ENCODE measurements at regions of chr1 and their contacts with region 1.

Region 1: GRCh38 chr1:26097696-26098095 is 13.9 kb upstream of the PDIK1L start:
- DNase-seq: no peak
- H3K4me3 ChIP-seq: no peak overlapping the region
- H3K27ac ChIP-seq: no peak overlapping the region
- H3K4me1 ChIP-seq: no peaks in the 10 kb centered on the region
- H3K27me3 ChIP-seq: peaks cover 16% of the 10 kb centered on the region
- CTCF ChIP-seq: no peak
- EP300 ChIP-seq: no peak
- POLR2A ChIP-seq: no peak

Region 2: GRCh38 chr1:25867210-25867991 is 230.3 kb before region 1 on chr1:
- in situ Hi-C with region 1: no loop called
- intact Hi-C with region 1: no loop called
- DNase-seq: no peak
- H3K4me3 ChIP-seq: no peak overlapping the region
- H3K27ac ChIP-seq: peak overlapping the region in 1 of 4 donors; percentile 62
- H3K4me1 ChIP-seq: peaks cover 7 to 26% (median 22%) of the 10 kb centered on the region in 4 donors
- H3K27me3 ChIP-seq: no peaks in the 10 kb centered on the region
- CTCF ChIP-seq: no peak
- EP300 ChIP-seq: no peak
- POLR2A ChIP-seq: no peak

Region 3: DNA sequence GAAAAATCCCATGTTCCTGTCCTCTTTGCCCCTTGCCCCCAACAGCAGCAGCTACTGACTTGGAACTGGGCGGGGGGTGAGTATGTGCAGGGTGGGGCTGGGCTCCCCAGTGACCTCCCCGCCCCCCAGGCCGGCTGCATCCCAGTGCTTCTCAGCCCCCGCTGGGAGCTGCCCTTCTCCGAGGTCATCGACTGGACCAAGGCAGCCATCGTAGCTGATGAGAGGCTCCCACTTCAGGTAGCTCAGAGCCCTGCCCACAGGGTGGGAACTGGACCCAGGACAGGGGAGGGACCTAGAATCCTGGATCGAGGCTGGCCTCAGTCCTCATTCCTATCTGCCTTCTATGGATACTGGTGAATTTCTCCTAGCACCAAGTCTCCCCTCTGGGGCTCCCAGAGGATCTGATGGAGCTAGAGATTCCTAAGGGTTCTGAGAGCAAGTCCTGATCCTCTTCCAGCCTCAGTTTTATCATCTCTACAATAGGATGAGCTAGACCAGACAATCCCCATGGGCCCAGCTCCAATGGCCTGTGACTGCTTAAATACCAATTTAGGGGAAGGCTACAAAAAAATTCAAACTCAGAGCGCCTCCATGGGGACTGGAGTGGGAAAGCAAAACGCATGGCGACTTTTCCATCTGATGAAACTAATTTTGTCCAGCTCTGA is 68.1 kb before region 1 on chr1:
- in situ Hi-C with region 1: no loop called
- intact Hi-C with region 1: no loop called
- DNase-seq: no peak
- H3K4me3 ChIP-seq: no peak overlapping the region
- H3K27ac ChIP-seq: no peak overlapping the region
- H3K4me1 ChIP-seq: peaks cover 0 to 1% (median under 1%) of the 10 kb centered on the region in 4 donors
- H3K27me3 ChIP-seq: peaks cover 4% of the 10 kb centered on the region
- CTCF ChIP-seq: no peak
- EP300 ChIP-seq: no peak
- POLR2A ChIP-seq: no peak

Region 4: GRCh38 chr1:26066857-26067256 is 30.8 kb before region 1 on chr1:
- in situ Hi-C with region 1: no loop called
- intact Hi-C with region 1: loop called (anchors 1 kb)
- DNase-seq: no peak
- H3K4me3 ChIP-seq: no peak overlapping the region
- H3K27ac ChIP-seq: no peak overlapping the region
- H3K4me1 ChIP-seq: no peaks in the 10 kb centered on the region
- H3K27me3 ChIP-seq: peaks cover 6% of the 10 kb centered on the region
- CTCF ChIP-seq: no peak
- EP300 ChIP-seq: no peak
- POLR2A ChIP-seq: no peak

Region 5: DNA sequence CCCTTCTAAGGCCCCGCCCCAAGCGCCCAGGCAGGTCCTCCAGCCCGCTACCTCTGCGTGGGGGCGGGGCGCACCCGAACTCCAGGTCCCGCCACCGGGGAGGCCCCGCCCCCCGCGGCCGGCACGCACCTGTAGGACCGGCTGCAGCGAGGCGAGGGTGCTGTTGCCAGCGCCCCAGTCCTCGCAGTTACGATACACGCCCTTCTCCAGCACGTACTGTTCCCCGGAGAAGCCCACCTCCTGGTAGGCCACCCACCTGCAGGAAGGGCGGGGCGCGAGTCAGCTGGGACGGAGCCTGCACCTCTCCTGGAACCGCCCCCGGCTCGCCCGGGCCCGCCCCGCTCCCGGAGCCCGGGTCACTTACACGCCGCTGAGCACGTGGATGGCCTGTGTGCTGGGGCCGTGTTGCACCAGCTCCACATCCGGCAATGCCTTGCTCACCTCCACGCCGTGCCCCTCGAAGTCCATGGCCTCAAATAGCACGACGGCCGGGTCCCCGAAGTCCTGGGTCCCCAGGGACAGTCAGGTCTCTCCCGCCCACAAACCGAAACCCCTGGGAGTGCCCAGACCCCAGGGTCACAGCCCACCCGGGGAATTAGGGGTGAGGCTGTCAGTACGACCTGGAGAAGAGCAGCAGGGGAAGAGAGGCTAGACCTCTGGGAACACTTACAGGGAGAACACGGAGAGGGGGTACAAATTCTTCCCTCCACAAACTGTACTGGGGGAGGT is 238.9 kb after region 1 on chr1:
- in situ Hi-C with region 1: no loop called
- intact Hi-C with region 1: no loop called
- DNase-seq: peak; percentile 96
- H3K4me3 ChIP-seq: peak overlapping the region; percentile 22 to 57 (median 34)
- H3K27ac ChIP-seq: peak overlapping the region in 3 of 4 donors; percentile 28 to 70 (median 51)
- H3K4me1 ChIP-seq: peaks cover 0 to 21% (median 11%) of the 10 kb centered on the region in 4 donors
- H3K27me3 ChIP-seq: peaks cover 41% of the 10 kb centered on the region
- CTCF ChIP-seq: no peak
- EP300 ChIP-seq: peak; percentile 18
- POLR2A ChIP-seq: no peak